B cell (primary cell): ENCODE measurements at regions of chr19 and their contacts with region 1.

Region 1: GRCh38 chr19:47790398-47790814 is 11.9 kb downstream of the SELENOW start:
- DNase-seq: peak; percentile 81
- ATAC-seq: peak; percentile 68
- H3K4me3 ChIP-seq: no peak overlapping the region
- H3K4me3 Mint-ChIP-seq: no peak overlapping the region
- H3K27ac ChIP-seq: no peak overlapping the region
- H3K27ac Mint-ChIP-seq: no peak overlapping the region
- H3K4me1 ChIP-seq: peaks cover 0 to 10% of the 10 kb centered on the region in 2 donors
- H3K4me1 Mint-ChIP-seq: peaks cover 5% of the 10 kb centered on the region
- H3K27me3 ChIP-seq: no peaks in the 10 kb centered on the region
- H3K27me3 Mint-ChIP-seq: peaks cover 1% of the 10 kb centered on the region
- CTCF ChIP-seq: peak; percentile 80

Region 2: DNA sequence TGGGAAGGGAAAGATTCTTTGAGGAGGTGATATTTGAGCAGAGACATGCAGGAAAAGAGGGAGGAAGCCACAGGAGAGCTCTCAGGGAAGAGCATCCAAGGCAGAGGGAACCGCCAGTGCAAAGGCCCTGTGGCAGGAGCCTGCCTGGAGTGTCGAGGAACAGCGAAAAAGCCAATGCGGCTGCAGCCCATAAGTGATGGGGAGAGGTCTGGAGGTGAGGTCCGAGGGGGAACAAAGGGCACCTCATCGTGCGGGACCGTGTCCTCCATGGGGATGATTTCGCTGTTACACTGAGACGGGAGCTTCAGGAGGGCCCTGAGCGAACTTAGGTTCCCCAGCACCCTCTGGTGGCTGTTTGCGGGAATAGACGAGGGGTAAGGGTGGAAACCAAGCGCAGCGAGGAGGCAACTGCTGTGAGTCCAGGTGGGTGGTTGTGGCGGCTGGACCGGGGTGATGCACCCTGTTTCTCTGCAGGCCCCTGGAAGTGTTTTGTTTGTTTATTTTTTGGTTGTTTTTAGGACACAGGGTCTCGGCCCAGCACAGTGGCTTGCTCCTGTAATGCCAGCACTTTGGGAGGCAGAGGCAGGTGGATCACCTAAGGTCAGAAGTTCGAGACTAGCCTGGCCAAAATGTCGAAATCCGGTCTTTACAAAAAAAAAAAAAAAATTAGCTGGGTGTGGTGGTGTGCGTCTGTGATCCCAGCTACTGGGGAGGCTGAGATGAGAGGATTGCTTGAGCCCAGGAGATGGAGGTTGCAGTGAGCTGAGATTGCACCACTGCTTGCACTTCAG is 83.1 kb before region 1 on chr19:
- CTCF ChIA-PET with region 1: no interaction called
- POLR2A ChIA-PET with region 1: no interaction called
- intact Hi-C with region 1: no loop called
- DNase-seq: peak; percentile 73
- ATAC-seq: peak; percentile 73
- H3K4me3 ChIP-seq: no peak overlapping the region
- H3K4me3 Mint-ChIP-seq: no peak overlapping the region
- H3K27ac ChIP-seq: no peak overlapping the region
- H3K27ac Mint-ChIP-seq: no peak overlapping the region
- H3K4me1 ChIP-seq: no peaks in the 10 kb centered on the region
- H3K4me1 Mint-ChIP-seq: no peaks in the 10 kb centered on the region
- H3K27me3 ChIP-seq: peaks cover 0 to 10% (median 6%) of the 10 kb centered on the region in 4 experiments
- H3K27me3 Mint-ChIP-seq: peaks cover 16% of the 10 kb centered on the region
- CTCF ChIP-seq: peak; percentile 69

Region 3: GRCh38 chr19:47765523-47766358 is 24.7 kb before region 1 on chr19:
- CTCF ChIA-PET with region 1: interaction called, 43 read pairs
- POLR2A ChIA-PET with region 1: no interaction called
- intact Hi-C with region 1: loop called (anchors 1 kb)
- DNase-seq: peak; percentile 57
- ATAC-seq: peak; percentile 45
- H3K4me3 ChIP-seq: no peak overlapping the region
- H3K4me3 Mint-ChIP-seq: no peak overlapping the region
- H3K27ac ChIP-seq: no peak overlapping the region
- H3K27ac Mint-ChIP-seq: no peak overlapping the region
- H3K4me1 ChIP-seq: no peaks in the 10 kb centered on the region
- H3K4me1 Mint-ChIP-seq: no peaks in the 10 kb centered on the region
- H3K27me3 ChIP-seq: no peaks in the 10 kb centered on the region
- H3K27me3 Mint-ChIP-seq: no peaks in the 10 kb centered on the region
- CTCF ChIP-seq: peak; percentile 57